Psoas muscle (tissue), 8 donors: ENCODE measurements at regions of chr3 and their contacts with region 1.

Region 1: GRCh38 chr3:151146071-151146730 is 56.8 kb downstream of the GPR171 start:
- DNase-seq: peak; percentile 60 to 72
- ATAC-seq: peak; percentile 88 to 98 (median 95)
- H3K4me3 ChIP-seq: peak overlapping the region; percentile 13
- H3K27ac ChIP-seq: no peak overlapping the region
- H3K4me1 ChIP-seq: peaks cover 12% of the 10 kb centered on the region
- H3K27me3 ChIP-seq: peaks cover 0 to 7% (median 0%) of the 10 kb centered on the region in 3 donors
- CTCF ChIP-seq: peak; percentile 86

Region 2: GRCh38 chr3:150721285-150722130 is 424.7 kb before region 1 on chr3:
- intact Hi-C with region 1: loop called (anchors 2 kb)
- DNase-seq: no peak
- ATAC-seq: peak; percentile 65 to 93 (median 77)
- H3K4me3 ChIP-seq: no peak overlapping the region
- H3K27ac ChIP-seq: no peak overlapping the region
- H3K4me1 ChIP-seq: no peaks in the 10 kb centered on the region
- H3K27me3 ChIP-seq: no peaks in the 10 kb centered on the region
- CTCF ChIP-seq: peak; percentile 87

Region 3: DNA sequence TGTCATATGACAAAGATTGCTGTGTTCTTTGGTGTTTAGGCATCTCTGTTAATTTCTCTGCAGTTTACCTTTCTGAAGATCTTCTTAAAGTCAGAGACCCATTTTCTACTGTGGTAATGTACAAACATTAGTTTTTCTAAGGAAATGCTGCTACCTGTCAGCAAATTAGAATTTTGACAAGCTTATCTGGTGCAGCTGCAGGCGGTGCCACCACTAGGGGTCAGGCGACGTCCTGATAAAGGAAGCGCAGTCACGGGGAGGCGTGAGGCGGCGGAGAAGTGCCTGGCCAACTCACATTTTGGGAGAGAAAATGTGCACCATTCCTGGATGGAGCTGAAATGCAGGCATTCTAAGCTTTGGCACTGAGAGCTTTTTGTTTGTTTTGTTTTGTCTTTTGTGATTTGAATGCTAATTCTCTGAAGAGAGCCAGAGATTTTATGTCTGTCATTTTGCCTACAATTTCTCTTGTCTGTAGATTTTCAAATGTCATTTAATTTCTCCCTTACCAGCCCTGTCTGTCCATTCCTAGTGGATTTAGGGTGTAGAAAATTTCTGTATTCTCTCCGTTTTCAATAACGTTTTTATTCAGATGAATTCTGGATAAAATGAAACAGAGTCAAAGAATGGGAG is 358.3 kb before region 1 on chr3:
- intact Hi-C with region 1: loop called (anchors 2 kb)
- DNase-seq: peak; percentile 84 to 91
- ATAC-seq: peak; percentile 76 to 96 (median 86)
- H3K4me3 ChIP-seq: no peak overlapping the region
- H3K27ac ChIP-seq: no peak overlapping the region
- H3K4me1 ChIP-seq: no peaks in the 10 kb centered on the region
- H3K27me3 ChIP-seq: peaks cover 0 to 2% (median 0%) of the 10 kb centered on the region in 3 donors
- CTCF ChIP-seq: peak; percentile 93

Region 4: GRCh38 chr3:150922611-150923010 is 223.6 kb before region 1 on chr3:
- intact Hi-C with region 1: loop called in 1 of 2 experiments (anchors 5 kb)
- DNase-seq: no peak
- ATAC-seq: no peak
- H3K4me3 ChIP-seq: no peak overlapping the region
- H3K27ac ChIP-seq: no peak overlapping the region
- H3K4me1 ChIP-seq: no peaks in the 10 kb centered on the region
- H3K27me3 ChIP-seq: peaks cover 0 to 3% (median 2%) of the 10 kb centered on the region in 3 donors
- CTCF ChIP-seq: no peak